Pancreas (tissue), 10 donors: ENCODE measurements at regions of chr3 and their contacts with region 1.

Region 1: GRCh38 chr3:24680214-24680967 is 185.7 kb upstream of the THRB start:
- DNase-seq: peak; percentile 35 to 89 (median 70)
- ATAC-seq: peak; percentile 77 to 88 (median 86)
- H3K4me3 ChIP-seq: no peak overlapping the region
- H3K27ac ChIP-seq: no peak overlapping the region
- H3K4me1 ChIP-seq: peaks cover 0 to 7% (median 0%) of the 10 kb centered on the region in 3 donors
- H3K27me3 ChIP-seq: no peaks in the 10 kb centered on the region
- CTCF ChIP-seq: peak; percentile 69 to 73 (median 72)

Region 2: DNA sequence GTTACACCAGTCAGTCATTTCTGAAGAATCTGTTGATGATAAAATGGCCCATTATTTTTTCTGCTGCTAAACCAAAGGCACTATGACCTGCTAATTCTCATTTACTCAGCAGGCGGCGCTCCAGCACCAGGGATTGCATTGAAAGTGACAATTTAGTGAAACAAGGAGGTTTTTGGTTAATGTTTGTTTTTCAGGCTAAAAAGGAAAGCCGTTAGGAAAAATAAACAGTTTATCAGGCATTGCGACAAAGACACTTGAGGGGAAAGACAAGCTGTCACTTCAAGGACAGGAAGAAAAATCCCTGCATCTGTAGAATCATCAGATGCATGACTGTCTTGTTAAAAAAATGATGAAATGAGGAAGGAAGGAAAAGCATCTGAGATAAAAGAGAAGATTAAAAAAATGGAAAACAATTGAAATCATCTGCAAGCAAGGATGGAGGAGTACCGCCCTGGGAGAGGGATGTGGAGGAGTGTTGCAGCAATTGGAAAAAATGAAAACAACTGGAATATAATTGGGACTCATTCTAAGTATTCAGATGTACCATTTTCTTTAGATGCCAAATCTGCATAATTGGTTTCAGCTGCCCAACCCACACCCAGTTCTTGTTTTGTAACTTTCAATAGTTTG is 681.3 kb before region 1 on chr3:
- intact Hi-C with region 1: loop called in 2 of 3 experiments (anchors 5 to 10 kb)
- DNase-seq: peak in 5 of 6 donors; percentile 20 to 84 (median 66)
- ATAC-seq: peak in 3 of 4 donors; percentile 68 to 74 (median 71)
- H3K4me3 ChIP-seq: no peak overlapping the region
- H3K27ac ChIP-seq: no peak overlapping the region
- H3K4me1 ChIP-seq: no peaks in the 10 kb centered on the region
- H3K27me3 ChIP-seq: no peaks in the 10 kb centered on the region
- CTCF ChIP-seq: peak; percentile 52 to 84 (median 64)

Region 3: GRCh38 chr3:24004171-24004938 is 676.0 kb before region 1 on chr3:
- intact Hi-C with region 1: loop called in 2 of 3 experiments (anchors 5 to 10 kb)
- DNase-seq: no peak
- ATAC-seq: no peak
- H3K4me3 ChIP-seq: no peak overlapping the region
- H3K27ac ChIP-seq: no peak overlapping the region
- H3K4me1 ChIP-seq: no peaks in the 10 kb centered on the region
- H3K27me3 ChIP-seq: no peaks in the 10 kb centered on the region
- CTCF ChIP-seq: no peak